PC-9 (cell line): ENCODE measurements at regions of chr7 and their contacts with region 1.

Region 1: DNA sequence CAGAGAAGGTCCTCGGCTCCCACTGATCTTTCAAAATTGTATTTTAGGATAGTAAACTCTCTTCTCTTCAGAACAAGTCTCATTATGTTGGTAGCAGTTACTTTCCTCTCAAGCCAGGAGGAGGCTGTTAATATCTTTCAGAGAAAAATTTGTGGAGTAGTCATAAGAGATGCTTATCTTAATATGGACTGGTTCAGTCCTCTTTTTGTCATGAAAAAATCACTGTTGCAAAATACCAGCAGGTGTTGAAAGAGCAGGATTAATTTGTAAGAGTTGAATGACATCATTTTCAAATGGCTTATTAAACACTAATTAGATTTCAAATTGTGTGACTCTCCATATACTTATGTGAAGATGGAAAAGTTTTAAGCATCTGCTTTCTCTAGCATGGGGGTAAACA is 662.5 kb downstream of the POM121L12 start:
- DNase-seq: no peak
- H3K4me3 ChIP-seq: no peak overlapping the region
- H3K27ac ChIP-seq: no peak overlapping the region
- H3K4me1 ChIP-seq: no peaks in the 10 kb centered on the region
- H3K27me3 ChIP-seq: no peaks in the 10 kb centered on the region
- CTCF ChIP-seq: no peak

Region 2: DNA sequence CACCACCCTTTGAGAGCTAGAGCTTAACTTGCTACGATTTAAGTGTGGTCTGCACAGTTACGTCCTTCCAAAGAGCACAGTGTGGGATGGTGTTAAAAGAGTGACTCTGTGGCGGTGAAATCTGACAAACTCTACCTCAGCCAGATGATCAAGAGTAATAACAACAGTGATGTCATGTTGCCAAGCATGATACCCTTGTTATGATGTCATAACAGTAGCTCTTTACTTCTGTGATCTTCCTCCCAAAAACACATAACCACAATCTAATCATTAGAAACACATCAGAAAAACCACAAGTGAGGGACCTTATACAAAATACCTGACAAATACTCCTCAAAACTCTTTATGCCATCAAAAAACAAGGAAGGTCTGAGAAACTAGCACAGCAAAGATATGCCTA is 13.2 kb before region 1 on chr7:
- CTCF ChIA-PET with region 1: no interaction called
- POLR2A ChIA-PET with region 1: no interaction called
- intact Hi-C with region 1: no loop called
- DNase-seq: no peak
- H3K4me3 ChIP-seq: no peak overlapping the region
- H3K27ac ChIP-seq: no peak overlapping the region
- H3K4me1 ChIP-seq: no peaks in the 10 kb centered on the region
- H3K27me3 ChIP-seq: no peaks in the 10 kb centered on the region
- CTCF ChIP-seq: no peak

Region 3: DNA sequence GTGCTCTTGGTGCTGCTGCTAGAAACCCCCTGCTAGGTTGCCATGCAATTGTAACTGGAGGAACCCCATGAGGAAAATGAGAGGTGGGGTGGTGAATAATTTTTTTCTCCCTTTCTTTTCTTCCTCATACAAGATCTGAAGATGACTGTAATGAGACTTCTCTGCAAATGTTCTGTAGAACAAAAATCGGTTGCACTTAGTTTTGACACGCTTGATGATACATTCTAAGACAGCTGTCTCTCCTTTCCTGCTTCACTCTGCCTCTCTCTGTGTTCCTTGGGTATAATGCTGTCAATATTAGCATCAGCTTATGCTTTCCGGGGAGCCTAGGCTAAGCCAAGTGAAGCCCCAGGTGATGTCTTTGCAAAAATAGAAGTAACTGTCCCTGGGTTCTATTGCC is 59.0 kb after region 1 on chr7:
- CTCF ChIA-PET with region 1: no interaction called
- POLR2A ChIA-PET with region 1: no interaction called
- intact Hi-C with region 1: loop called (anchors 10 kb)
- DNase-seq: no peak
- H3K4me3 ChIP-seq: no peak overlapping the region
- H3K27ac ChIP-seq: no peak overlapping the region
- H3K4me1 ChIP-seq: no peaks in the 10 kb centered on the region
- H3K27me3 ChIP-seq: no peaks in the 10 kb centered on the region
- CTCF ChIP-seq: no peak

Region 4: GRCh38 chr7:54153462-54153861 is 455.5 kb after region 1 on chr7:
- CTCF ChIA-PET with region 1: no interaction called
- POLR2A ChIA-PET with region 1: no interaction called
- intact Hi-C with region 1: no loop called
- DNase-seq: no peak
- H3K4me3 ChIP-seq: no peak overlapping the region
- H3K27ac ChIP-seq: no peak overlapping the region
- H3K4me1 ChIP-seq: no peaks in the 10 kb centered on the region
- H3K27me3 ChIP-seq: no peaks in the 10 kb centered on the region
- CTCF ChIP-seq: no peak